Activated CD8-positive, alpha-beta T cell treated with anti-CD3 and anti-CD28 coated beads, Interleukin-2, amount 10 ng/mL, durations not matched to agents 7 days and 5 days (primary cell): ENCODE measurements at regions of chr19 and their contacts with region 1.

Region 1: DNA sequence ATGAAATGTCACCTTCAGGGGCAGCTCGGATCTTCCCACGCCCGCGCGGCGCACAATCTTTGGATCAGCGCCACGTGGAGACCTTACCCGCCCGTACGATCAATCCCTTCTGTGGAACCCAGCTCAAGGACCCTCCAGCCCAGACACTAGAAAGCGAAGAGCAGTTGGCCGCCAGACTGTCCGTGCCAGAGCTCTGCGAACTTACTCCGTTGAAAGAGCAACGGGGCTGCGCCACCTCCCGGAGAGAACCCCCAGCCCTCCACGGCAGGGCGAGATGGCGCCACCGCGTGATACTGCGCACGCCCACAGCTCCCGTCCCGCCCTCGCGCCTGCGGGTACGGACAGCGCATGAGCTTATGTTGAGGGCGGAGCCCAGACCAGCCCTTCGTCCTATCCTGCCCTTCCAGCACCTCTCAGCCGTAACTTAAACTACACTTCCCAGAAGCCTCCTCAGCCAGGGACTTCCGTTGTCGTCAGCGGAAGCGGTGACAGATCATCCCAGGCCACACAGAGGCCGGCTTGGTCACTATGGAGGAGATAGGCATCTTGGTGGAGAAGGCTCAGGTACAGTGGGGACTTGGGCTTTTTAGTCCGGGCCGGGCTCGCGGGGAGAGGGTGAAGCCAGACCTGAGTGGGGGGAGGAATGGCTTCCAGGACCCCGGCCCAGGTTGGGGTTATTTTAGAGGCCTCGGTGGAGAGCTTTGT is at the start of gene PSMC4:
- DNase-seq: peak; percentile 99
- ATAC-seq: peak; percentile 99
- H3K4me3 Mint-ChIP-seq: peak within 1 kb of the TSS; percentile 95
- H3K27ac Mint-ChIP-seq: peak within 1 kb of the TSS; percentile 95
- H3K4me1 Mint-ChIP-seq: peaks cover 43% of the 10 kb centered on the region
- H3K27me3 Mint-ChIP-seq: no peaks in the 10 kb centered on the region
- total RNA-seq, gene PSMC4: 120 to 121 TPM

Region 2: DNA sequence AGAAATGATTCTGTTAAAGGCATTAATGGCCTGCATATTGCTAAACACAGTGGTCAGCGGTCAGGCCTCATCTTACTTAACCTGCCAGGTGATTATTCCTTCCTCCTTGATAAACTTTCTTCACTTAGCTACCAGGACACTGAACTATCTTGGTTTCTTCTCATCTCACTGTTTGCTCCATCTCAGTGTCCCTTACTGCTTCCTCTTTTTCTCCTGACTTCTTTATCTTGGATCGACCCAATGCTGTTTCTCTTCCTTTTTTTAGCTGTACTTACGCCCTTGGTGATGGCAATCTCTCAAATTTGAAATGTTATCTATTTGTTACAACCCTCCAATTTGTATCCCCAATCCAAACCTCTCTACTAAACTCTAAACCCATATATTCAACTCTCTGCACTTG is 225.2 kb before region 1 on chr19:
- CTCF ChIA-PET with region 1: no interaction called
- POLR2A ChIA-PET with region 1: no interaction called
- DNase-seq: no peak
- ATAC-seq: no peak
- H3K4me3 Mint-ChIP-seq: no peak overlapping the region
- H3K27ac Mint-ChIP-seq: no peak overlapping the region
- H3K4me1 Mint-ChIP-seq: no peaks in the 10 kb centered on the region
- H3K27me3 Mint-ChIP-seq: peaks cover 40% of the 10 kb centered on the region

Region 3: GRCh38 chr19:39833464-39834286 is 137.2 kb before region 1 on chr19 and contains the start of gene DYRK1B:
- CTCF ChIA-PET with region 1: interaction called, 11 read pairs
- POLR2A ChIA-PET with region 1: interaction called, 5 read pairs
- DNase-seq: peak; percentile 99
- ATAC-seq: peak; percentile 91
- H3K4me3 Mint-ChIP-seq: peak within 1 kb of the TSS; percentile 67
- H3K27ac Mint-ChIP-seq: peak within 1 kb of the TSS; percentile 83
- H3K4me1 Mint-ChIP-seq: peaks cover 34% of the 10 kb centered on the region
- H3K27me3 Mint-ChIP-seq: no peaks in the 10 kb centered on the region
- total RNA-seq, gene DYRK1B: 7.5 to 8.5 TPM

Region 4: GRCh38 chr19:39906820-39907611 is 63.8 kb before region 1 on chr19:
- CTCF ChIA-PET with region 1: interaction called, 26 read pairs
- POLR2A ChIA-PET with region 1: no interaction called
- DNase-seq: no peak
- ATAC-seq: no peak
- H3K4me3 Mint-ChIP-seq: no peak overlapping the region
- H3K27ac Mint-ChIP-seq: no peak overlapping the region
- H3K4me1 Mint-ChIP-seq: peaks cover 6% of the 10 kb centered on the region
- H3K27me3 Mint-ChIP-seq: no peaks in the 10 kb centered on the region

Region 5: DNA sequence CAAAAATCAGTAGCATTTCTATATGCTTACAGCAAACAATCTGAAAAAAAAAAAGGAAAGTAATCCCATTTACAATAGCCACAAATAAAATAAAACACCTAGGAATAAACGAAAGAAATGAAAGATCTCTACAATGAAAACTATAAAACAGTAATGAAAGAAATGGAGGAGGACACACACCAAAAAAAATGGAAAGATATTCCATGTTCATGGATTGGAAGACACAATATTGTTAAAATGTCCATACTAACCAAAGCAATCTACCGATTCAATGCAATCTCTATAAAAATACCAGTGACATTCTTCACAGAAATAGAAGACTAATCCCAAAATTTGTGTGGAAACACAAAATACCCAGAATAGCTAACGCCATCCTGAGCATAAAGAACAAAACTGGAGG is 41.1 kb before region 1 on chr19:
- CTCF ChIA-PET with region 1: interaction called, 61 read pairs
- POLR2A ChIA-PET with region 1: interaction called, 29 read pairs
- DNase-seq: no peak
- ATAC-seq: no peak
- H3K4me3 Mint-ChIP-seq: no peak overlapping the region
- H3K27ac Mint-ChIP-seq: no peak overlapping the region
- H3K4me1 Mint-ChIP-seq: peaks cover 11% of the 10 kb centered on the region
- H3K27me3 Mint-ChIP-seq: no peaks in the 10 kb centered on the region

Region 6: GRCh38 chr19:39996811-39997594 is 26.2 kb after region 1 on chr19 and contains the start of gene ZNF546:
- CTCF ChIA-PET with region 1: interaction called, 11 read pairs
- POLR2A ChIA-PET with region 1: interaction called, 24 read pairs
- DNase-seq: peak; percentile 96
- ATAC-seq: peak; percentile 94
- H3K4me3 Mint-ChIP-seq: peak within 1 kb of the TSS; percentile 89
- H3K27ac Mint-ChIP-seq: peak within 1 kb of the TSS; percentile 94
- H3K4me1 Mint-ChIP-seq: peaks cover 33% of the 10 kb centered on the region
- H3K27me3 Mint-ChIP-seq: no peaks in the 10 kb centered on the region
- total RNA-seq, gene ZNF546: 4.9 to 5.2 TPM